ENCODE measurements at regions of chr17 and their contacts with region 1.

Region 1: GRCh38 chr17:38824899-38825761 is at the start of gene CWC25:
- DNase-seq: peak; percentile 97
- ATAC-seq: peak; percentile 93
- total RNA-seq, gene CWC25: 9.4 TPM

Region 2: GRCh38 chr17:38853292-38854219 is 28.4 kb after region 1 on chr17 and contains the start of gene RPL23:
- intact Hi-C with region 1: loop called (anchors 2 kb)
- DNase-seq: peak; percentile 96
- ATAC-seq: peak; percentile 97
- total RNA-seq, gene RPL23: 897 TPM

Region 3: GRCh38 chr17:39069114-39069756 is 244.1 kb after region 1 on chr17:
- intact Hi-C with region 1: no loop called
- DNase-seq: no peak
- ATAC-seq: peak; percentile 62